Motor neuron (in vitro differentiated cells): ENCODE measurements at regions of chr1 and their contacts with region 1.

Region 1: DNA sequence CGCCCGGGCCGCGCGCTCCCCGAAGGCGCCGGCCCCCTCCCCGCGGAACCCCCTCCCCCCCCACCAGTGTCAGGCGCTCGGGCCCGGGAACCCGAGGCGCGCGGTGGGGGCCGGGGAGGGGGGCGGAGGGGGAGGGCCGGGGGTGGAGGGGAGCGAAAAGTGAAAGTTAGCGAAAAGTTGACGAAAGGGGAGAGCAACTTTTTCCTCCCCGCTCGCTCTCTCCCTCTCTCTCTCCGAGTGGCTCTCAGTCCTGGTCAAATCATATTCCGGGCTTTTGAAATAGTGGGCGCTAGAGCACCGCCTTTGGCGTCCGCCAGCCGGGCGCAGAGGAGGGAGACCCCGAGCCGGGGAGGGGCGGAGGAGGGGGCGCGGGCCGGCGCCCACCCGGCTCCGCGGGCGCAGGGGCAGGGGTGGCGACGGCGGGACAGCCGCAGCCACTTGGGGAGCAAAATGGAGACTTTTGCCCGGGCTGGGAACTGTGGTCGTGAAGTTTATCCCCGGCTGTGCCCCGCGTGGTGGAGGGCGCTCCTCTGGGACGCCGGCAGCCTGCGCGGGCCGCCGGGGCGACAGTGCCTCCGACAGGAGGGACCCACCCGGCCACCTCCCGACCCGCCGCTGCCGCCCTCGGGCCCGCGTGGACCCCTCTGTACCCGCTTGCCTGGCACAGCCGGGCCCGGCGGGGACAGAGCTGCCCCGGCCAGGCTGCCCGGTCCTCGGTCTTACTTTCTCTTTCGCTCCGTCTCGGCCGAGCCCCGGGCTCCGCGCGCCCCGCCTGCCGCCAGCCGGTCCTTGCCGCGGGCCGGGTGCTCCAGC is 694 bp downstream of the PRDM16 start:
- ATAC-seq: peak in 6 of 8 experiments; percentile 55 to 82 (median 72)
- H3K4me3 ChIP-seq: peak overlapping the region in 3 of 5 donors; percentile 15 to 41 (median 25)
- H3K27ac ChIP-seq: no peak overlapping the region
- H3K4me1 ChIP-seq: peaks cover 0 to 29% of the 10 kb centered on the region in 2 donors

Region 2: GRCh38 chr1:2968471-2968881 is 101.2 kb before region 1 on chr1:
- in situ Hi-C with region 1: loop called in 1 of 9 experiments (anchors 25 kb)
- ATAC-seq: peak in 3 of 8 experiments; percentile 49 to 60 (median 53)
- H3K4me3 ChIP-seq: no peak overlapping the region
- H3K27ac ChIP-seq: peak overlapping the region in 1 of 2 donors; percentile 55
- H3K4me1 ChIP-seq: peaks cover 0 to 28% of the 10 kb centered on the region in 2 donors

Region 3: DNA sequence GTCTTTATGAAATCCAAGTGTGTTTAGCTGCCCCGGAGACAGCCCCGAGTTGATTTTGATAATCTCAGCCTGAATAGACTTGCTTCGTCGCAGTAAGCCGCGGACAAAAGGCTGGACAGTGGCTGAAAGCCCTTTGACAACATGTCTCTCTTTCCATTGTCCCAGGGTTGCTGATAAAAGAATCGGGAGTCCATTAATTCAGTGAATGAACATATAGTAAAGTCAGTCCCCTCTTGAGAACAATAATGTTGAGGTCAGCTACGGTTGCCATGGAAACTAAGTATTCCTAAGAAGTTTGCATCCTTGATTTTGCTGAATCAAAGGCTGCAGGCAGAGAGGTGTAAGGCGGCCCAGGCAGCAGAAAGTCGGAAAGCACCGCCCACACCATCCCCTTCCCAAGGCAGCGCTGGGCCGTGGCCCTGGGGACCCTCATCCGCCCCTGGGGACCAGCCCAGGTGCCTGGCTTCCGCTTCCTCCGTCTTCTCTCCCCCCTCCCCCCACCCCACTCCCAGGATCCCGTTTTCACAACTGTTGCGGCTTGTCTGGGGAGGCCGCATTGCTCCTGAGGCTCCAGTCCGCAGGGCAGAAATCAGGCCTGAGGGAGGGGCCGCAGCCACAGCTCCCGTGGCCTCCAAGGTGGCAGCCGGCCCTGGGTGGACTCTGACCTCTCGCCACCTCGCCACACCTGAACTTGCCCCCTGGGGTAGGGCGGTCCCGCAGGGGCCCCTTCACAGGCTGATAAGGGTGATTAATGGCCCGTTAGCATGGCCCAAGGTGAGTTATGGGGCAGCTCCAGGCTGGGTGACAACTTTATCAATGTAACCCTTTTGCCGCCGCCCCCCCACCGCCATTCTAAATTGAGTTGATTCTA is 180.2 kb after region 1 on chr1:
- in situ Hi-C with region 1: loop called in 1 of 9 experiments (anchors 25 kb)
- ATAC-seq: peak in 5 of 8 experiments; percentile 45 to 73 (median 66)
- H3K4me3 ChIP-seq: no peak overlapping the region
- H3K27ac ChIP-seq: no peak overlapping the region
- H3K4me1 ChIP-seq: peaks cover 0 to 42% of the 10 kb centered on the region in 2 donors

Region 4: DNA sequence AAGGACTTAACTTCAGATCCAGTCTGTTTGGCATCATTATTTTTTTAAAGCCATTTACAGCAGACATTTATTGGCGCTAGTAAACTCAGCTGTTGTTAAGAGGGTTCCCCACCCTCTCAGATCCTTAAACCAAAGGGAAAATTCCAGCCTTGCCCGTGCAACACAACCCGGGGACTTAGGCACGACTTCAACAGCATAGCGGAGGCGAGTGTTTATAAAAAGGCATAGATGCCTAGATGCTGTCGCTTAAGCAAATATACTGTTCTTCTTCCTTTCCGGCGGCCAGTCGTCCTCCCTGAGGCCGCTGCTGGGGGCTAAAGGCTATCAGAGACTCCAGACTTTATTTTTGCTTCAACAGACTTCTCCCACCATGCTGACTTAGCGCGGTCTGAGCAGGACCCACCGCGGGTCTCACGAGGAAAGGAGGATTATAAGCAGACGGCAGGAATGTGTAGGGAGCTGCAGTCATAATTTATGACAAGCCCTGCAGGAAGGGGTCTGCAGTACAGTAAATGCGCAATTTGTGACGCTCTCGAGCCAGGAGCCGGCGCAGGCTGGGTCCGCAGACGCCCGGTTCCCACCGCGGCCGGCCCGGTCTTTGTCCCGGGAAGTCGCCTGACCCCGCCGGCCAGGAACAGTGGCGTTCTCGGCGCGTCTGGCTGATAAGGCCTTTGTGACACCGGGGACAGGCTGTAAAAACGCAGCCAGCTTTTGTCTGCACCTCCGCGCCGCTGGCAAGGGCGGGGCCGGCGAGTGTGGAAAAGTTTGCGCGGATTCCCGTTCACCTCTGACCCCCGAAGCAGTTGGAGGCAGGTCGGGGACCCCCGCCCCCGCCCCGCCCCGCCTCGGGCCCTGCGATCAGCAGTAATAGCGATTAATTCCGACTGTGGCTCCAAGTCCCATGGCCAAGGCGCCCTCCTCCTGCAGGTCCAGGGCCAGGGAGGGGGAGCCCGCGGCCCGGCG is 323.6 kb after region 1 on chr1:
- in situ Hi-C with region 1: loop called in 1 of 9 experiments (anchors 25 kb)
- ATAC-seq: peak in 5 of 8 experiments; percentile 65 to 80 (median 79)
- H3K4me3 ChIP-seq: peak overlapping the region in 2 of 5 donors; percentile 1 to 19
- H3K27ac ChIP-seq: no peak overlapping the region
- H3K4me1 ChIP-seq: peaks cover 0 to 20% of the 10 kb centered on the region in 2 donors